ENCODE measurements at regions of chr2 and their contacts with region 1.

Region 1: DNA sequence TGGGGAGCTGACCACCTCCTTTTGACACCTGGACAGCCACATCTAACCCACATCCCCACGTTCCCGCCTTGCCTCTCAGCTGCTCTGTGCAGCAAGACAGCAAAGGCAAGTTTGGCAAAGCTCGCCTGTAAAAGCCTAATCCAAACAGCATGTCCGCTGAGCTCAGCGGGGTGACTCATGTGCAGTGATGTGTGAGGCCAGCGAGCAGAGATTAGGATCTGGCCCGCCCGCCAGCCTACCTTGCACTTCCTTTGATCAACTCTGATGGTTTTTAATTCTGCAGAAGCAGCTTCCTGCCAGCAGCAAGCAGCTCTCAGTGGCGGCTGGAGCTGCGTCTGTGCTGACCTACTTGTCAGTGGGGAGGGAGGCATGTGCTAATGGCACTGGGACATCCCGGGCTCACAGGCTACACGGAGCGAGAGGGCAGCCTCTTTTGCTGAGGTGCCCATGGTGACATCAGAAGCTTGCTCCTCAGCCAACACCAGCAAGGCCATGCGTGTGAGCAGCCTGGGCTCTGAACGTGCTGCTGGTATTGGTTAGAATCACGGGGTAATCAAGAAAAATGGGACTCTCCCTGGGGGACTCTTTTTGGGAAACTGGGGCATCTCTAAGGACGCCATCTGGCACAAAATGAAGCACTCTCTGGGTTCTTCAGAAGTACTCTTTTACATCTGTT is 36.0 kb upstream of the EML4 start:
- DNase-seq: peak; percentile 96
- H3K4me3 ChIP-seq: peak overlapping the region in 3 of 4 donors; percentile 20 to 29 (median 28)
- H3K27ac ChIP-seq: peak overlapping the region; percentile 79 to 89 (median 82)
- H3K4me1 ChIP-seq: peaks cover 0 to 54% (median 48%) of the 10 kb centered on the region in 4 donors
- H3K27me3 ChIP-seq: no peaks in the 10 kb centered on the region
- CTCF ChIP-seq: no peak
- EP300 ChIP-seq: peak in 1 of 4 donors; percentile 35
- POLR2A ChIP-seq: no peak

Region 2: DNA sequence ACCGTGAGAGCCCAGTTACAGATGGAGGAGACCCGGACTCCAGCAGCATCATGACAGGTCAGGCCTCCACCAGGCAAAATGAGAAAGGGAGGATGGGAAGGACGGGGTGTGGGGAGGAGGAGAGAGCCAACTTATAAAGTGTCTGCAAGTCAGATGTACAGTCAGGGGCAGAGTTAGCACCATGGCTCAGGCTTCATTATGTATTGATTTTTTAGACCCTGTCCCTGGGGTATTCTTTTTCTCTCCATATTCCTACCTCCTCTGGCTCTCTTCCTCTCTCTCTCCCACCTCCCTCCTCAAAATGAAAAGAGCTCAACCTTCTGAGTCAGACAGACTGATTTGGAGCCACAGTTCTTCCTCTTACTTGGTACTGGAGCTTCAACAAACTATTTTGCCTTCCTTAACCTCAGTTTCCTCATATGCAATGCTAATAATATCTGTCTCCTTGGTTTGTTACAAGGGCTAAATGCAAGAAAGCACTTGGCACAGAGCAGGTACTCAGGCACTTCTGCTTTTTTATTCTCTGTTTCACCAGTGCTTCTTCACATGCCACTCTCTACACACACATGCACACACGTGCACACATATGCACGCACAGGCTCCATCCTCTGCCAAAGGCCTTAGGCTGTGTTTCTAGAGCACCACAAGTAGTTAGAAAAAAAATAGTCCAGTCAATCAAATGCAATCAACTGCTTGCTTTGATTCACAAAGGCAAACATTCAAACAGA is 177.6 kb before region 1 on chr2:
- intact Hi-C with region 1: no loop called
- DNase-seq: no peak
- H3K4me3 ChIP-seq: no peak overlapping the region
- H3K27ac ChIP-seq: no peak overlapping the region
- H3K4me1 ChIP-seq: peaks cover 0 to 8% (median 6%) of the 10 kb centered on the region in 4 donors
- H3K27me3 ChIP-seq: no peaks in the 10 kb centered on the region
- CTCF ChIP-seq: no peak
- EP300 ChIP-seq: no peak
- POLR2A ChIP-seq: no peak

Region 3: GRCh38 chr2:42169100-42169873 is 36.2 kb after region 1 on chr2 and contains the start of gene EML4:
- intact Hi-C with region 1: loop called (anchors 2 kb)
- DNase-seq: peak; percentile 96
- H3K4me3 ChIP-seq: peak within 1 kb of the TSS; percentile 68 to 95 (median 82)
- H3K27ac ChIP-seq: peak within 1 kb of the TSS; percentile 85 to 95 (median 92)
- H3K4me1 ChIP-seq: peaks cover 0 to 48% (median 37%) of the 10 kb centered on the region in 4 donors
- H3K27me3 ChIP-seq: no peaks in the 10 kb centered on the region
- CTCF ChIP-seq: no peak
- EP300 ChIP-seq: no peak
- POLR2A ChIP-seq: peak; percentile 65
- total RNA-seq, gene EML4: 16.1 to 23.8 (median 20.6) TPM

Region 4: GRCh38 chr2:42685303-42685702 is 552.2 kb after region 1 on chr2:
- intact Hi-C with region 1: no loop called
- DNase-seq: no peak
- H3K4me3 ChIP-seq: no peak overlapping the region
- H3K27ac ChIP-seq: no peak overlapping the region
- H3K4me1 ChIP-seq: peaks cover 0 to under 1% (median 0%) of the 10 kb centered on the region in 4 donors
- H3K27me3 ChIP-seq: no peaks in the 10 kb centered on the region
- CTCF ChIP-seq: no peak
- EP300 ChIP-seq: no peak
- POLR2A ChIP-seq: no peak

Measured in sigmoid colon (tissue), 7 donors.